Adrenal gland (tissue), 19 donors: ENCODE measurements at regions of chr1 and their contacts with region 1.

Region 1: DNA sequence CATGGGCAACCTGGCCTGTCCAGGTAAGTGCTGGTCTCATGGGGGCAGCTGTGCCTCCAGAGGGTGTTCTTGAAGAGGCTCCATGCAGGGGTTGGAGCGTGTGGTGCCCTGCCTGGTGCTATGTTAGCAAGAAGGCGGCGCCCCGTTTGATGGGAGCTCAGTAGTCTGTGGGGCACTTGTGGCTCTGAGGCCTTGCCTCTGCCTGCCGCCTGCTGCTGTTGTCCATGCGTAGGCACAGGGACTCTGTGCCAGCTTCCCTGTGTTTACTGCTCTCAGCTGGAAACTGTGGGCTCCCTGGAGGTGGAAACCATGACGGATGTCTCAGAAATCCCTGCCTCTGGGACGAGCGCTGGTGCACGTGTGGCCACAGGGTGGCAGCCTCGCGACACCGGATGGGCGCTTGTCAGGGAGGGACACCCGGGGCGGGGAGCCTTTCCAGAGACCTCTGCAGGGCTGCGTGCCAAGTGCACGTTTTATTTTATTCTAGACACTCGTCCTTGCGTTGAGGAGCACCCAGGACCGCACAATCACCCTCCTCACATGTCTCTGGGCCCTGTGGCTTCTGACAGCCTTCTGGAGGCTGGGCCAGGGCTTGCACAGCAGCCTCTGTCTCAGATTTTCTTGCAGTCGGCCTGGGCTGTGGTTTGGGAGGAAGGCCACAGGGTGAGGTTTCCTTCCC is 27.1 kb downstream of the SNAP47 start:
- DNase-seq: peak; percentile 88 to 95 (median 94)
- H3K4me3 ChIP-seq: no peak overlapping the region
- H3K27ac ChIP-seq: peak overlapping the region in 2 of 5 donors; percentile 57 to 61
- H3K4me1 ChIP-seq: peaks cover 2 to 17% of the 10 kb centered on the region in 2 donors
- H3K27me3 ChIP-seq: no peaks in the 10 kb centered on the region
- CTCF ChIP-seq: peak; percentile 82 to 92 (median 86)
- POLR2A ChIP-seq: no peak

Region 2: DNA sequence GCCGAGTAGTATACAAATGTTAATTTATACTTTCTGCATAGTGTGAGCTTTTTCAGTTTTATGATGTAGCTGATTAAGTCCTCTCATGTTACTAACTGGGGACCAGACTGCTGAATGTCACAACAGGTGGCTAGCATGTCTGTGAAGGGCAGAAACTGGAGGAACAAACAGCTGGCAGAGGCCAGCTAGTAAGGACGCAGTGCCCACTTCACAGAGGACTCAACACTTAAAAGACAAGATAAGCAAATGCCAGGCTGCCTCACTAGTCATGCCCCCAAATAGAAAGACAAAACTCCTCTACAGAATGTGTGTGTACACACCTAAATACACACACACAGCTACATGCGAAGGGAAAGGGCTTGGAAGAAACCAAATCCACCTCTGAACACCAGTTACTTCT is 272.8 kb before region 1 on chr1:
- intact Hi-C with region 1: loop called in 1 of 2 experiments (anchors 10 kb)
- DNase-seq: no peak
- H3K4me3 ChIP-seq: no peak overlapping the region
- H3K27ac ChIP-seq: no peak overlapping the region
- H3K4me1 ChIP-seq: no peaks in the 10 kb centered on the region
- H3K27me3 ChIP-seq: no peaks in the 10 kb centered on the region
- CTCF ChIP-seq: no peak
- POLR2A ChIP-seq: no peak

Region 3: GRCh38 chr1:227946624-227947385 is 184.4 kb after region 1 on chr1:
- intact Hi-C with region 1: loop called (anchors 2 to 5 kb)
- DNase-seq: peak; percentile 77 to 84 (median 84)
- H3K4me3 ChIP-seq: peak overlapping the region in 2 of 4 donors; percentile 9 to 62
- H3K27ac ChIP-seq: peak overlapping the region; percentile 33 to 77 (median 69)
- H3K4me1 ChIP-seq: peaks cover 24 to 28% of the 10 kb centered on the region in 2 donors
- H3K27me3 ChIP-seq: no peaks in the 10 kb centered on the region
- CTCF ChIP-seq: peak; percentile 36 to 85 (median 66)
- POLR2A ChIP-seq: no peak